Activated B cell treated with CpG ODN at 0.5 μM for 24 hours (primary cell): ENCODE measurements at regions of chr7 and their contacts with region 1.

Region 1: DNA sequence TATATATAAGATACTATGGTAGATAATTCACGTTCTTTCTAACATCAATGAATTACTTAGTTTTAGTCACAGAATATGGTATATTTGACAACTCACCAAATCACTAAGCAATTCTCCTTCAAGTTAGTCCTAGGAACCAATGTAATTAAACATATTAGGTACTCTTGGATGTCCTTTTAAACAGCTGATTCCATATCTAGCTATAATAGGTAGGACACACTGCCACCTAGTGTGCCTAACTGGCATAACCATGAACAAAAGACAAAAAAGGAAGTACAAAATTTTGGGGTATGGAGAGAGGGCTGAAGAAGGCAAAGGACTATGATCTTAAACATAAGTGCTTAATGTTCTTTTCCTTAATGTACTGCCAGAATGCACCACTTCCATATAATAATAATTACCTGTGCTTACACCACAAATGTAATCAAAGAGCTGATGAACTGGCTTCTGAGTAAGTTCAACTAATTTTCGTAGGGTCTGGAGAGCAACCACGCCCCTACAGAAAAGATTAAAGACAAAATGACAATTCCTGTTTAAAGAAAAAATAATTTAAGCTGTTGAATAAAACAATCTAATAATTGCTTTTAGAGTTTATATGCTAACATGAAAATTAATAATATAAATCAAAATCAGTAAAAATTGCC is 28.7 kb downstream of the PNPLA8 start:
- DNase-seq: no peak
- ATAC-seq: peak; percentile 95
- H3K4me3 Mint-ChIP-seq: no peak overlapping the region
- H3K27ac Mint-ChIP-seq: no peak overlapping the region
- H3K4me1 Mint-ChIP-seq: peaks cover 24% of the 10 kb centered on the region
- H3K27me3 Mint-ChIP-seq: no peaks in the 10 kb centered on the region
- CTCF ChIP-seq: peak; percentile 43

Region 2: DNA sequence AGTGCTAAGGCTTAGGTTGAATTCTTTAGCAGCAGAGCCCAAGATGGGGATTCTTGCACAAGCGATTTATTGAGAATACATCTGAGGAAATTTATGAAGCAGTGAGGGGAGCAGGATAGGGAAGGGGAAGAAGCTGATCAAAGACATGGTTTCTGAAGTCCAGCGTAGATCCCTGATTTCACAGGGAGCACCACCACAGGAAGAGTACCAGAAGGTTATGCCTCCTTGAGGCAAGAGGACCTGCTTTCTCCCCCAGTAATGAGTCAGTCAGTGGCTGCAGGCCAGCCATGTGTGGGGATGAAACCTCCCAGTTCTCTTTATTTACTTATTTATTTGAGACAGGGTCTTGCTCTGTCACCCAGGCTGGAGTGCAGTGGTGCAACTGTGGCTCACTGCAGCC is 788.2 kb before region 1 on chr7:
- CTCF ChIA-PET with region 1: no interaction called
- POLR2A ChIA-PET with region 1: no interaction called
- intact Hi-C with region 1: no loop called
- DNase-seq: no peak
- ATAC-seq: no peak
- H3K4me3 Mint-ChIP-seq: no peak overlapping the region
- H3K27ac Mint-ChIP-seq: no peak overlapping the region
- H3K4me1 Mint-ChIP-seq: no peaks in the 10 kb centered on the region
- H3K27me3 Mint-ChIP-seq: no peaks in the 10 kb centered on the region
- CTCF ChIP-seq: no peak

Region 3: GRCh38 chr7:108146070-108146837 is 350.9 kb before region 1 on chr7:
- CTCF ChIA-PET with region 1: interaction called, 10 read pairs
- POLR2A ChIA-PET with region 1: no interaction called
- intact Hi-C with region 1: no loop called
- DNase-seq: no peak
- ATAC-seq: peak; percentile 67
- H3K4me3 Mint-ChIP-seq: no peak overlapping the region
- H3K27ac Mint-ChIP-seq: no peak overlapping the region
- H3K4me1 Mint-ChIP-seq: no peaks in the 10 kb centered on the region
- H3K27me3 Mint-ChIP-seq: peaks cover 7% of the 10 kb centered on the region
- CTCF ChIP-seq: peak; percentile 94

Region 4: DNA sequence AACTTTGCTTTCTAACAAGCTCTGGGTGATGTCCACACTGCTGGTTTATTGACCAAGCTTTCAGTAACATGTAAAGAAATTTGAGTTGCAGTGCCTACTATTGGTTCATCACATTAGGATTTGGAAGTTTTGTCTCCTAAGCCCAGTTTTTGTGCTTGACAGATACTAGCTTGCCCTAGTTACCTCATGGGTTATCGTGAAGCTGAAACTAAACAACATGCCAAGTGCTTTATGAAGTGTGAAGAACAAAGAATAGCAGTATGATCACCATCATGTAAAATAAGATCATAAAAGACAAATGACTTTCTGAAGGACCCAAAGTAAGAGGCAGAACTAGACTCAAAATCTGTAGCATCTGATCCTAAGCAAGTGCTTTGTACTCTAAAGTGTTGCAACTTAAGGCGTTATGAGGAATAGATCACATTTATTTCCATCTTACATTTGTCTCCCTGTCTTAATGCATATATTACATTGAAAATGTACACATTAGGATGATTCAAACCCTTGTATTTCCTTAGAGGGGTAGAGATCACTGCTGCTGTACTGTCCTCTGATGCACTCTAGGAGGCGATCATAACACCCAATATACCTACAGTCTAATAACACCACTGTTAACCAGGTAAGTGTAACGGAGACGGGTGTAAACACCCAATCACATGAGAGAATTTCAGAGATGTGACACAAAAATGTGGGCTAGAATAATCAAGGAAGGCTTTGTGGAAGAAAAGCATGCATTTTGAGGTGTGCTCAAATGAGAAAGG is 112.3 kb before region 1 on chr7:
- CTCF ChIA-PET with region 1: interaction called, 4 read pairs
- POLR2A ChIA-PET with region 1: no interaction called
- intact Hi-C with region 1: loop called (anchors 10 kb)
- DNase-seq: no peak
- ATAC-seq: peak; percentile 65
- H3K4me3 Mint-ChIP-seq: no peak overlapping the region
- H3K27ac Mint-ChIP-seq: no peak overlapping the region
- H3K4me1 Mint-ChIP-seq: peaks cover 14% of the 10 kb centered on the region
- H3K27me3 Mint-ChIP-seq: peaks cover 3% of the 10 kb centered on the region
- CTCF ChIP-seq: no peak

Region 5: GRCh38 chr7:108459931-108460551 is 37.2 kb before region 1 on chr7:
- CTCF ChIA-PET with region 1: interaction called, 64 read pairs
- POLR2A ChIA-PET with region 1: interaction called, 3 read pairs
- intact Hi-C with region 1: loop called (anchors 2 kb)
- DNase-seq: no peak
- ATAC-seq: peak; percentile 36
- H3K4me3 Mint-ChIP-seq: no peak overlapping the region
- H3K27ac Mint-ChIP-seq: peak overlapping the region; percentile 12
- H3K4me1 Mint-ChIP-seq: peaks cover 11% of the 10 kb centered on the region
- H3K27me3 Mint-ChIP-seq: peaks cover 42% of the 10 kb centered on the region
- CTCF ChIP-seq: no peak

Region 6: DNA sequence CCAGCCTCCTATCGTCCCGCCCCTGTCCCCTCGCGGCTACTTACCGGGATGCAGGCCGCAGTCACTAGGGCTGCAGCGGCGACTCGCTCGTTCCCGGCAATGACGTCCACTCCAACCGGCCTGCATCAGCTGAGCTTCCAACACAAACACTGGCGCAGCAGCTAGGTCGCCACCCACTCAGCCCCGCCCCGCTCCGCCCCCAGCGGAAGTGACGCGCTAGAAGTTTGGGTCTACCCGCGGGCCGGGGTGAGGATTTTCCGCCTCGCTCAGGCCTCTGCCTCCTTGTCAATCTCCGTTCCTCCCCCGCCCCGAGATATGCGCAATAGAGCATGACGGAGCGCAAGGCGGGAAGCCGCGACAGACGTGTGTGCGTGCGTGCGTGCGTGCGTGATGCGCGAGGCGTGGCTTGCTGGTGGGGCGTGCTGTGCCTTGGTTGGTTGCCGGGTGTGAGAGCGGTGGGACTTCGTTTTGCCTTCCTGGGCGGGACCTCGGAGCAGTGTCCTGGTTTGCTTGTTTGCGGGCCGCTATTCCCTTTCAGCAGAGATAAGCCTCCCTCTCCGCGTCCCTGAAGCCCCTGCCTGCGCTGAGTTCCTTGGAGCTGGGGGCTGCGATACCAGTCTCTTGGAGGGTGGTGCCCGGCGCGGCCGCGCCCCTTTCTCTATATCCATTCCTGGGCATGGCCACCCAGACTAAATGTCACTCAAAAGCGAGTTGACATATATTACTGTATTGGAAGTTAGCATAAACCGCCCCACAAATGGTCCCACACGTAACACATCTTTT is 29.0 kb after region 1 on chr7 and contains the start of gene PNPLA8:
- CTCF ChIA-PET with region 1: interaction called, 9 read pairs
- POLR2A ChIA-PET with region 1: interaction called, 11 read pairs
- intact Hi-C with region 1: no loop called
- DNase-seq: peak; percentile 100
- ATAC-seq: peak; percentile 90
- H3K4me3 Mint-ChIP-seq: peak within 1 kb of the TSS; percentile 96
- H3K27ac Mint-ChIP-seq: peak within 1 kb of the TSS; percentile 97
- H3K4me1 Mint-ChIP-seq: peaks cover 53% of the 10 kb centered on the region
- H3K27me3 Mint-ChIP-seq: no peaks in the 10 kb centered on the region
- CTCF ChIP-seq: no peak
- total RNA-seq, gene PNPLA8: 20.9 and 25.5 TPM in 2 replicates

Region 7: GRCh38 chr7:108716783-108717182 is 219.6 kb after region 1 on chr7:
- CTCF ChIA-PET with region 1: no interaction called
- POLR2A ChIA-PET with region 1: no interaction called
- intact Hi-C with region 1: no loop called
- DNase-seq: no peak
- ATAC-seq: no peak
- H3K4me3 Mint-ChIP-seq: no peak overlapping the region
- H3K27ac Mint-ChIP-seq: no peak overlapping the region
- H3K4me1 Mint-ChIP-seq: no peaks in the 10 kb centered on the region
- H3K27me3 Mint-ChIP-seq: no peaks in the 10 kb centered on the region
- CTCF ChIP-seq: no peak